WTC11 (cell line): ENCODE measurements at regions of chr1 and their contacts with region 1.

Region 1: GRCh38 chr1:8314346-8315280 is 3.3 kb upstream of the SLC45A1 start:
- DNase-seq: peak; percentile 86
- ATAC-seq: peak; percentile 80
- H3K4me3 Mint-ChIP-seq: no peak overlapping the region
- H3K27ac Mint-ChIP-seq: peak overlapping the region; percentile 21; the same call in 1 of the 2 replicates
- H3K4me1 Mint-ChIP-seq: peaks cover 43% of the 10 kb centered on the region
- H3K27me3 Mint-ChIP-seq: peaks cover 31% of the 10 kb centered on the region
- CTCF ChIP-seq: peak; percentile 84

Region 2: DNA sequence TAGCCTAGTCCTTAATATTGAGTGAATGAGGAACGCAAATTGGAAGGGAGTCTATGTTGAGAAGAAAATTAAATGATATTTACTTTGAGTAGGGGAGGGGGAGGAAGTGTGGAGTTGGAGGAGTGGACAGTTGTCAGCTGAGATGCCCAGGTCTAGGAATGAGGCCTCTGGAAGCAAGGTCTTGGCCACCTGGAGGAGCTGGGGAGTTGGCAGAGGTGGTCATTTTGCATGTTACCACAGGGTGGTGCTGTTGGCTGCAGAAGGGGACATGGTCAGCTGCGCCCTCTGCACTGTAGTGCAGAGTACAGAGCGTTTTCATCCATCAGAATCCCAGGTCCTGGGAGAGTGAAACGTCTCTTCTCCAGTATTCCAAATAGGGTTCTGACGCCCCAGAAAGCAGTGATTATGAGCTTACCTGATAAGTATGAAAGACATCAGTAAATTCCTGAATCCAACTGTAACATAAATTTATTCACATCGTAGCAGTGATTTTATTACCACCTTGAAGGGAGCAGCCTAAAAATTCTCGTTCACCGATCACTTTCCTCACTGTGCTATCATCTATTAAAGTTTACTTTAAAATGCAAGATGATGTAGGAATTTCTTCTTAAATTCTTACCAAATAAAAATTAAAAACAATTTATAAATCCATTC is 339.3 kb before region 1 on chr1:
- CTCF ChIA-PET with region 1: interaction called, 81 read pairs
- POLR2A ChIA-PET with region 1: interaction called, 6 read pairs
- DNase-seq: peak; percentile 89
- ATAC-seq: peak; percentile 100
- H3K4me3 Mint-ChIP-seq: no peak overlapping the region
- H3K27ac Mint-ChIP-seq: no peak overlapping the region
- H3K4me1 Mint-ChIP-seq: 0 out of 2 replicates have a peak, but pooled peaks cover 2% of the 10 kb centered on the region
- H3K27me3 Mint-ChIP-seq: no peaks in the 10 kb centered on the region
- CTCF ChIP-seq: peak; percentile 88

Region 3: DNA sequence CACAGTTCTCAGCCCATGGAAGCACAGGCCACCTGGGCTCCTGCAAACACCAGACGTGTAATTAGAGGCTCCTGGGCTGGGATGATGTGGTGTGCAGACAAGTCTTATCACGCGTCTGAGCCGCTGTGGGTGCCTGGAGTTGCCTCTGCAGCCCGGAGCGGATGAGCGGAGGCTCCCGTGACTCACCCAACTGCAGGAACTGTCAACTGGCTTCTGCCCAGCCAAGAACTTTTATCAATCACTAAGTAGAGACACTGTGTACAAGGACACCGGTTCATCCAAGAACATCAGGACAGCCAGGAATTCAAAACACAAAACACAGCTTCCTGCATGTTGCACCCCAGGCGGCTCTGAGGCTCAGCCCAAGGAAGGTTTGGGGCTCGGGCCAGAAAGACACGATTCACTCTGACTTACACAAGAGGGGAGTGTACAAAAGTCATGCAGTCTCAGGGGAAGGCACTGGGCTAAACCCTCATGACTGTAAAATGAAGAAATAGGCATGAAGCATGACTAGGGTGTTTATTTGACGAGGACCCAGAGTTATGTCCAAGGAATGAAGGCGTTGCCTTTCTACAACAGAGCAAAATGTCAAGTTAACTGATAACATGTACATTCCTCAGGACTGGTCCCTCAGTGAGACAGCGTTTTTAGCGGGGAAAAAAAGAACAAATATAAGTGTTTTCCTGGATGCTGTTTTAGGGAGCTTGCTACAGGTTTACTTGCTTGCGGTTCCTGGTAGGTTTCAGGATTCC is 309.6 kb before region 1 on chr1:
- CTCF ChIA-PET with region 1: interaction called, 10 read pairs
- POLR2A ChIA-PET with region 1: no interaction called
- DNase-seq: no peak
- ATAC-seq: no peak; the same call in 1 of the 2 replicates
- H3K4me3 Mint-ChIP-seq: no peak overlapping the region
- H3K27ac Mint-ChIP-seq: peak overlapping the region; percentile 86
- H3K4me1 Mint-ChIP-seq: peaks cover 47% of the 10 kb centered on the region
- H3K27me3 Mint-ChIP-seq: no peaks in the 10 kb centered on the region
- CTCF ChIP-seq: no peak

Region 4: DNA sequence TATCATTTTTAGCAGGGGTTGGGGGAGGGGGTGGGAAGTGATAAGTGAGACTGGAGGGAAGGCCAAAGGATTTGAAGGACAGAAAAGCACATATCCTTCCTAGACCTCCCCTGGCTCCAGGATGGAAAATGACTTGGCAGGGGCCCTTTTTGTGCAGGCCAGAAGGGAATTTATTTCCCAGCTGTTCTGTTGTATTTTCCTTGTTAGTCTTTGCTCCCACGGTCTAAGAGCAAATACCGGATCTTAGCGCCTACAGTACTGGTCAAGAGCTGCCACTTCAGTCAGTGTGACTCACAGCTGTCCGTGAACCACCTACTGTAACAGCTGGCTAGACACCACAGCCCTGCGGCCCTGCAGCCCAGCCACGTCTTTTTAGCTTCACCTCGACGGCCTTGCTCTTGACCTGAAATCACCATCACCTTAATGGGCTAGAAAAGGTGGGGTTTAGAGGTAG is 237.5 kb before region 1 on chr1:
- CTCF ChIA-PET with region 1: interaction called, 12 read pairs
- POLR2A ChIA-PET with region 1: no interaction called
- DNase-seq: no peak
- ATAC-seq: no peak
- H3K4me3 Mint-ChIP-seq: no peak overlapping the region
- H3K27ac Mint-ChIP-seq: no peak overlapping the region; the same call in 1 of the 2 replicates
- H3K4me1 Mint-ChIP-seq: peaks cover 27% of the 10 kb centered on the region
- H3K27me3 Mint-ChIP-seq: no peaks in the 10 kb centered on the region; the same call in 1 of the 2 replicates
- CTCF ChIP-seq: no peak

Region 5: GRCh38 chr1:8214501-8215173 is 100.0 kb before region 1 on chr1:
- CTCF ChIA-PET with region 1: interaction called, 10 read pairs
- POLR2A ChIA-PET with region 1: no interaction called
- DNase-seq: no peak
- ATAC-seq: no peak
- H3K4me3 Mint-ChIP-seq: no peak overlapping the region
- H3K27ac Mint-ChIP-seq: no peak overlapping the region
- H3K4me1 Mint-ChIP-seq: peaks cover 66% of the 10 kb centered on the region
- H3K27me3 Mint-ChIP-seq: peaks cover 18% of the 10 kb centered on the region
- CTCF ChIP-seq: no peak

Region 6: GRCh38 chr1:8303141-8303540 is 11.5 kb before region 1 on chr1:
- CTCF ChIA-PET with region 1: interaction called, 25 read pairs
- POLR2A ChIA-PET with region 1: no interaction called
- DNase-seq: no peak
- ATAC-seq: no peak
- H3K4me3 Mint-ChIP-seq: no peak overlapping the region
- H3K27ac Mint-ChIP-seq: no peak overlapping the region
- H3K4me1 Mint-ChIP-seq: peaks cover 15% of the 10 kb centered on the region
- H3K27me3 Mint-ChIP-seq: no peaks in the 10 kb centered on the region
- CTCF ChIP-seq: no peak